HepG2 (cell line): ENCODE measurements at regions of chr10 and their contacts with region 1.

Region 1: DNA sequence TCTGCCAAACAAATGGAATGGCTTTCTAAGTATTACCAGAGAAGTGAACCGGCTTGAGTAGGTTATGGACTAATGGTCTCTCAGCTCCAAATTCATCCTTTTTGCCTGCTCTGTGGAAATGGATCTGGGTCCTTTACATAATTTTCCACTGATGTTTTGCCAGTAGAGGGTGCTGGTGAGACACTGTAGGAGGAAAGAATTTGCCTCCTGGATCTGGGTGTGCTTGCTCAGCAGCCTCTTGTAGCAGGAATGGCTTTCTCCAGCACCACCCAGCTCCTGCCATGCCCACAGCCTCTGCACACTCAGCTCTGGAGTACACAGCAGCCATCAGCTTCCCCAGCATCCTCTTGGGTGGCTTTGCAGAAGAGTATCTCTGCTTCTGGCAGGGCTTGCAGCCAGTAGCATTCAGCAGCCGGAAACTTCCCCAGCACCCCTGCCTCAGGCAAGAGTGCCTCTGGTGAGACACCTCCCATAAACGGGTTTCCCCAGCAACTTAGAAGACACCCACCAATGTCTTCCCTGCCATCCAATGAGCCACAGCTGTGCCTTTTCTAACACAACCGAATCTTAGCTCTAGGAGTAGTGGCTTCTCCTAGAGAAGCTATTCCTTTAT is 235.0 kb upstream of the PLPP4 start:
- DNase-seq: peak; percentile 64
- ATAC-seq: peak; percentile 82
- H3K4me3 ChIP-seq: no peak overlapping the region
- H3K27ac ChIP-seq: no peak overlapping the region
- H3K4me1 ChIP-seq: no peaks in the 10 kb centered on the region
- H3K27me3 ChIP-seq: no peaks in the 10 kb centered on the region
- CTCF ChIP-seq: peak; percentile 82
- EP300 ChIP-seq: no peak
- POLR2A ChIP-seq: no peak
- RAD21 ChIP-seq: peak; percentile 47; the same call in 1 of the 2 replicates

Region 2: DNA sequence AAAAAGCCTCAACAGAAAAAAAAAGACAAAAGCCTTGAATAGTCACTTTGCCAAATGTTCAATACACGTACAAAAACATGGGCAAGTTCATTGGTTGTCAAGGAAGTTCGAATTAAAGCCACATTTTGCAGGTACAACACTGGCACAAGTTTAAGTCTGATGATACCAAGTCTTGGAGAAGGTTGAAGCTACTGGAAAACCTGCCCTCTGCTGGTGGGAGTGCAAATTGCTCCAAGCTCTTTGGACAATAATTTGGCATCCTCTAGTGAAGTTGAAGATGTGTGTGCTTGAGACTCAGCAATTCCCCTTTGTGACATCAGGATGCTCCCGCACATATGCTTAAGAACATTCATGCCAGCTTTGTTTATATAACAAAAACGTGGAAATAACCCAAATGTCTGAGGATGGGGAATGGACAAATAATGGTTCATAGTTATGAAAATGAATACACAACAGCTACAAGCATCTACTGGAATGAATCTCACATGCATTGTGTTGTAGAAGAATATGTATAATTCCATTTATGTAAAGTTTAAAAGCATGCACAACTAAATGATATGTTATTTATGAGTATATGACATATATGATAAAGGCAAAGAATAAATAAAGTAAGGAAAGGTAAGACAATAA is 115.0 kb after region 1 on chr10:
- CTCF ChIA-PET with region 1: interaction called, 32 read pairs
- POLR2A ChIA-PET with region 1: no interaction called
- in situ Hi-C with region 1: loop called (anchors 5 kb)
- intact Hi-C with region 1: loop called (anchors 1 kb)
- DNase-seq: peak; percentile 33
- ATAC-seq: peak; percentile 34; the same call in 1 of the 3 replicates
- H3K4me3 ChIP-seq: no peak overlapping the region
- H3K27ac ChIP-seq: no peak overlapping the region
- H3K4me1 ChIP-seq: no peaks in the 10 kb centered on the region
- H3K27me3 ChIP-seq: peaks cover 0 to 7% of the 10 kb centered on the region in 2 experiments; a peak in 1 of 5 replicates
- CTCF ChIP-seq: peak; percentile 72
- EP300 ChIP-seq: no peak
- POLR2A ChIP-seq: no peak
- RAD21 ChIP-seq: no peak

Region 3: DNA sequence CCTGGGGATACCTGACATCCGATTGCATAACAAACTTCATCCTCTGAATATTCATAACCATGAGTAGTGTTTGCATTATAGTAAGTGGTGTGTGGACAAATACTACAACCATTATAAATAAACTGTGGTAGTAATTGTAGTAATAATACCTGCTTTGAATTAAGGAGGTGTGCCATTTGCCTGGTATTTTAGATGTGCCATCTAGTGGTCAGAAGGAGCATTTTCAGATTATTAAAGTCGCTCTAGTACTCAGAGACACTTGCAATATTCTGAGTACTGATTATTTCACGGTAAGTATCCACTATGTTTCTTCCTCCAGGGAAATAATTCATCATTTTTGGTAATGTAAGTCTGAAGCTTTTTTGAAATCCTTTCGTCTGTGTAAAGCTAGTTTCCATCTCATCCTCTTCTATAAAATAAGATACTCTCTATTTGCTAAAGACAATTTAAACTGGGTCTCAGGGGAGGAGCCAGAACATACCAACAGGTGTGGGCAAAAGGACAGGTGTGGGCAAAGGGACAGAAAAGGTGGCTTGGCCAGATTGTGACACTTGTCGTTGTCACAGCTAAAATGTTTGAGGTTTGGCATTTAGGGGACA is 513.9 kb after region 1 on chr10:
- CTCF ChIA-PET with region 1: no interaction called
- POLR2A ChIA-PET with region 1: no interaction called
- in situ Hi-C with region 1: loop called (anchors 25 kb)
- intact Hi-C with region 1: no loop called
- DNase-seq: peak; percentile 5
- ATAC-seq: peak; percentile 60
- H3K4me3 ChIP-seq: no peak overlapping the region
- H3K27ac ChIP-seq: no peak overlapping the region
- H3K4me1 ChIP-seq: peaks cover under 1% of the 10 kb centered on the region; the same call in 1 of the 2 replicates
- H3K27me3 ChIP-seq: peaks cover 0 to 2% of the 10 kb centered on the region in 2 experiments; a peak in 1 of 5 replicates
- CTCF ChIP-seq: peak; percentile 54
- EP300 ChIP-seq: no peak
- POLR2A ChIP-seq: no peak
- RAD21 ChIP-seq: no peak